Activated naive CD4-positive, alpha-beta T cell treated with anti-CD3 and anti-CD28 coated beads for 36 hours (primary cell): ENCODE measurements at regions of chr9 and their contacts with region 1.

Region 1: GRCh38 chr9:70602321-70603019 is 188.0 kb upstream of the KLF9 start:
- DNase-seq: peak; percentile 71
- H3K4me3 Mint-ChIP-seq: no peak overlapping the region
- H3K27ac Mint-ChIP-seq: no peak overlapping the region
- H3K4me1 Mint-ChIP-seq: peaks cover 8% of the 10 kb centered on the region
- H3K27me3 Mint-ChIP-seq: no peaks in the 10 kb centered on the region

Region 2: GRCh38 chr9:69971643-69972449 is 630.6 kb before region 1 on chr9:
- CTCF ChIA-PET with region 1: interaction called, 11 read pairs
- intact Hi-C with region 1: loop called (anchors 1 kb)
- DNase-seq: peak; percentile 76
- H3K4me3 Mint-ChIP-seq: no peak overlapping the region
- H3K27ac Mint-ChIP-seq: no peak overlapping the region
- H3K4me1 Mint-ChIP-seq: no peaks in the 10 kb centered on the region
- H3K27me3 Mint-ChIP-seq: peaks cover 11% of the 10 kb centered on the region

Region 3: DNA sequence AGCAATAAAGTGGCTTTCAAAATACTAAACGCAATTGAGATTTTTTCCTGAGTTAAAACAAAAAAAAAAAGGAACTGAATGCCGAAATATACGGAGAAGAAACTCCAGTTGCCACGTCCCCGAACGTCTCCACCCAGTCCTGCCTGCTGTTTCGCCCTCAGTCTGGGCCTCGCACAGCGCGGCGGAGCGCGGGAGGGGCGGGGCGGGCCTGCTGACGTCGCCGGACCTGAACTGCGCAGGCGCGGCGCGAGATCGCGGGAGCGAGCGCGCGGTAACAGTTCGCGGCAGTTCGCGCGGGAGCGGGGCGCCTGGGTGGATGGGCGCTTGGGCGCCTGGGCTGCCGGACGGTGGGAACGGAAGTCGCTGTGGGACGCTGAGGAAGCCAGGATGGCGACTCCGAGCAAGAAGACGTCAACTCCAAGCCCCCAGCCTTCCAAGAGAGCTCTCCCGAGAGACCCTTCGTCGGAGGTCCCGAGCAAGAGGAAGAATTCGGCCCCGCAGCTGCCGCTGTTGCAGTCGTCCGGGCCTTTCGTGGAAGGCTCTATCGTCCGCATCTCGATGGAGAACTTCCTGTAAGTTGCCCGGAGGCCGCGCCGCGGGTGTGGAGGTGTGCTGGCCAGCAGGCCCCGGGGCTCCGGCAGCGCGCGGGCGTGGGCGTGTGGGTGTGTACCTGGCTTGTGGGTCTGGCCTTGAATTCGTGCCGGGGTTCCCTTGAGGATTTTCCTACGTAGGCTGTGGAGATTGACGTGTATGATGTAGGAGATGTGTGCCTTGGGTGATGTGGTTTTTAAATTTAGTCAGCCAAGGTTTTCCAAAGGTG is 343.6 kb before region 1 on chr9 and contains the start of gene SMC5:
- CTCF ChIA-PET with region 1: interaction called, 4 read pairs
- intact Hi-C with region 1: loop called (anchors 1 kb)
- DNase-seq: peak; percentile 85
- H3K4me3 Mint-ChIP-seq: peak within 1 kb of the TSS; percentile 92
- H3K27ac Mint-ChIP-seq: peak within 1 kb of the TSS; percentile 96
- H3K4me1 Mint-ChIP-seq: peaks cover 61% of the 10 kb centered on the region
- H3K27me3 Mint-ChIP-seq: no peaks in the 10 kb centered on the region
- total RNA-seq, gene SMC5: 30.4 to 31.2 TPM

Region 4: DNA sequence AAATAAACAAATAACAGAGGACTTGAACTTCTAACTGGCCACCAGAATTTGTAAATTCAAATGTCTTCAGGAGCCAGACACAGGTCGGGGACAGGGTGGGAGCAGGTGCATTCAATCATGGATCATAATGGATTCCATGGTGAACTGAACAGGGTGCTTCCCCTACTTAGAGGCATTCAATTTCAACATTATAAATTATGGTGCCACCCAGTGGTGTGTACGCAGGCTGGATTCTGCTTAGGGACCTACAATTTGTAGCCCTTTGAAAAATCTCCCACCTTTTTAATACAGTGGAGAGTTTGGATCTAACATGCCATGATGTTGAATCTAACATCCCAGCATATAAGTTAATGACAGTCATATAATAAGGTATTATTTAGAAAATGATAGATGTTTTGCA is 210.3 kb before region 1 on chr9:
- CTCF ChIA-PET with region 1: interaction called, 6 read pairs
- intact Hi-C with region 1: loop called (anchors 2 kb)
- DNase-seq: peak; percentile 24
- H3K4me3 Mint-ChIP-seq: no peak overlapping the region
- H3K27ac Mint-ChIP-seq: peak overlapping the region; percentile 32
- H3K4me1 Mint-ChIP-seq: peaks cover 78% of the 10 kb centered on the region
- H3K27me3 Mint-ChIP-seq: no peaks in the 10 kb centered on the region

Region 5: GRCh38 chr9:70413798-70414775 is 188.4 kb before region 1 on chr9 and contains the start of gene KLF9:
- CTCF ChIA-PET with region 1: interaction called, 10 read pairs
- intact Hi-C with region 1: no loop called
- DNase-seq: peak; percentile 96
- H3K4me3 Mint-ChIP-seq: peak within 1 kb of the TSS; percentile 100
- H3K27ac Mint-ChIP-seq: peak within 1 kb of the TSS; percentile 100
- H3K4me1 Mint-ChIP-seq: peaks cover 39% of the 10 kb centered on the region
- H3K27me3 Mint-ChIP-seq: no peaks in the 10 kb centered on the region
- total RNA-seq, gene KLF9: 44.2 to 45.0 TPM

Region 6: GRCh38 chr9:70494221-70494620 is 108.2 kb before region 1 on chr9:
- CTCF ChIA-PET with region 1: interaction called, 4 read pairs
- intact Hi-C with region 1: loop called (anchors 2 kb)
- DNase-seq: no peak
- H3K4me3 Mint-ChIP-seq: no peak overlapping the region
- H3K27ac Mint-ChIP-seq: peak overlapping the region; percentile 6
- H3K4me1 Mint-ChIP-seq: peaks cover 17% of the 10 kb centered on the region
- H3K27me3 Mint-ChIP-seq: peaks cover 4% of the 10 kb centered on the region

Region 7: DNA sequence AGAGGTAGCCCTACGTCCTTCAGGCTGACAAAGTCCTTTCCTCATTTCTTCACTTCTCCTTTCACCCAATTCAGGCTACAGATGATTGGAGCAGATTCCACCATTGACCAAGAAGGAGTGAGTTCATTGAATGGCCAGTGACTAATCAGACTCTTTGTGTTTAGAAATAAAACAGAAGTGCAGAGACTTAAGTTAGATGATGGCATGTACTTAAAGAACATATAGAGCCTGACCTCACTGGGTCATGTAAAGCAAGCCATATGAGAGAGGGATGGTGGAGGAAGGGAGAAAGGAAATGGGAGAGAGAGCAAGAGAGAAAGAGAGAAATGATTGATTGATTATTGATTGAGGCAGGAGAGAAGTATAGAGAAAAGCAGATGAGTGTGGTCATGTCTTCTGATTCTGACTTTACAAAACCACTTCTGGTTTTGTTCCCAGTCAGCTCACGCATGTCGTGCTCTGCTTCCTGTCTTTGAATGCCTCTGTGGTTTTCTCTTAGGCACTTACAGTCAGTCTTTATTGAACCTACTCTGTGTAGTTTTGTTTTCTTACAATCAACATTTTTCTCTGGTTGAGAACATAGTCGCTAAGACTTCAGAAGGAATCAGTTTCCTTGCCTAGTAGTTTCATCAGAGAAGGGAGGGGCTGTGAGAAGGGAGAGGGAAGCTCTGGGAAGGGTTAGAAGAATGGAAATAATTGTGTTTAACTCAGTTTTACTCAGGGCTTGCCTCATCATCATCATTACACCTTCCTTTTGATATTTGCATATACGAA is 38.9 kb before region 1 on chr9:
- CTCF ChIA-PET with region 1: interaction called, 19 read pairs
- intact Hi-C with region 1: loop called (anchors 1 kb)
- DNase-seq: peak; percentile 82
- H3K4me3 Mint-ChIP-seq: peak overlapping the region; percentile 38
- H3K27ac Mint-ChIP-seq: peak overlapping the region; percentile 97
- H3K4me1 Mint-ChIP-seq: peaks cover 52% of the 10 kb centered on the region
- H3K27me3 Mint-ChIP-seq: no peaks in the 10 kb centered on the region